AG04449 (cell line): ENCODE measurements at regions of chrX and their contacts with region 1.

Region 1: DNA sequence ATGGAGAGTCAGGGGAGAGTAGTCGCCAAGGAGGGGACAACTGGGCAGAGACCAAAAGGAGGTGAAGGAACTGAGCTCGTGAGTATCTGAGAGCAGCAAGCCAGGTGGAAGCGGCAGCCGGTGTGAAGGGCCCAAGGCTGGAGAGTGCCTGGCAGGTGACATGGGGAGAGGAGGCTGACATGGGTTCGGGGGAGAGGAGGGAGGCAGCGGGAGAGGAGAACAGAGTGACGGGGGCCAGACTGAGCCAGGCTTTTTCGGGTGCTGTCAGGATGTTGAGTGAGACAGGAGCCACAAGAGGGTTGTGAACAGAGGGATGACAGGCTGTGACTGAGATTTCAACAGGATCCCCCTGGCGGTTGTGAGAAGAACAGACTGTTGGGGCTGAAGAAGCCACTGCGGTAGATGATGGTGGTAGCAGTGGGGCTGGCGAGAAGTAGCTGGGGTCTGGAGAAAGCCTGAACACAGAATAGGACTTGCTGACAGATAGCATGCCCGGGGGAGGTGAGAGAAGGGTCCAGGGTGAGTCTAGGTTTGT is 5.7 kb downstream of the ELK1 start:
- DNase-seq: no peak
- H3K4me3 ChIP-seq: no peak overlapping the region
- CTCF ChIP-seq: peak; percentile 44

Region 2: DNA sequence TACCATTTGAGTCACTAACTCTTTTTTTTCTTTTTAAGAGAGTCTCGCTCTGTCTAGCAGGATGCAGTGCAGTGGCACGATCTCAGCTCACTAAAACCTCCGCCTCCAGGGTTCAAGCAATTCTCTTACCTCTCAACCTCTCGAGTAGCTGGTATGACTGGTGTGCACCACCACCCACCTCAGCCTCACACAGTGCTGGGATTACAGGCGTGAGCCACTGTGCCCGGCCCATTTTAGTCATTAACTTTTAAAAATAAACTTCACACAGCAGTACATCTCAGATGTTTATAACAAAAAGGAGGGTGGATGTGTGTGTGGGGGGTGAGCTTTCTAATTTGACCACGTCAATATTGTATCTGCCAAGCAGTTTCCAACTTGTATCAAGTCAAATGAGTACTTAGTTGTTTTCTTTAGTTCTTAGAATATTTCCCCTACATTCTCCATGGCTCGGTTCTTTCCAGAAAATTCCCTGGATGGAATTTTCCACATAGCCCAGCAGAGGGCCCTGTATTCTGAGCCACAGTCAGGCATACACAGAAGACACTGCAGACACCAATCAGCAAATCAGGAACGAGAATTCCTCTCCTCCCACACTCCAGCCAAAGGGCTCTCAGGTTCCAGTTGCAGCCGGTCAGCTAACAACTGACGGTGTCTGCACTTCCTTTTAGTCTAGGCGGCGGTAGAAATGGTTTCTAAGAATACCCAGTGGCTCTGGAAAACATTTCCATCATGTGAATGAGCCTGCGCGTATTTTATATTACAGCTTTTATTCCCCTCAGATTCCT is 103.7 kb before region 1 on chrX:
- CTCF ChIA-PET with region 1: interaction called, 45 read pairs
- POLR2A ChIA-PET with region 1: no interaction called
- DNase-seq: peak; percentile 59
- H3K4me3 ChIP-seq: no peak overlapping the region
- CTCF ChIP-seq: peak; percentile 37

Region 3: DNA sequence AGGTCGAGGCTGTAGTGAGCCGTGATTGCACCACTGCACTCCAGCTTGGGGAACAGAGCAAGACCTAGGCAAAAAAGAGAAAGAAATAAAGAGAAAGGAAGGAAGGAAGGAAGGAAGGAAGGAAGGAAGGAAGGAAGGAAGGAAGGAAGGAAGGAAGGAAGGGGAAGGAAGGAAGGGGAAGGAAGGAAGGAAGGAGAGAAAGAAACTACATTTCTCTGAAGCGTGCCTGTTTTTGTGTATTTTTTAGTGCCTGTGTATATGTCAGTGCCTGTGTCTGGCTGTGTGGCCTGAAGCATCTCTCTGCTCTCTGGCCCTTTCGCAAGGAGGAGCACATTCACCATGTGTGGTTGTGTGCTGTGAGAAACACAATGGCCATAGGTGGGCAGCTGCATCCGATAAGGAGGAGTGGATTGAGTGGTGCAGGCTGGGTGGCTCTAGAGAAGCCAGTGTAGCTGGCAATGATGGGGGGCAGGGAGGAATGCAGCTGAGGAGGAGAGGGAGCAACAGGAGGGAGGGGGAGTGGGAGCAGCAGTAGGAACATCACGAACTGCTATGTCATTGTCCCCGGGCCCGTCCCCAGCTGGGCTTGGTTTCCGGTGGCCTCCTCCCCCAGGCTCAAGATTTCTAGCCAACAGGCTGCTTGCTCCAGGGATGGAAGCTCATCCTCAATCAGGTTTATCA is 36.4 kb before region 1 on chrX:
- CTCF ChIA-PET with region 1: no interaction called
- POLR2A ChIA-PET with region 1: no interaction called
- DNase-seq: no peak
- H3K4me3 ChIP-seq: no peak overlapping the region
- CTCF ChIP-seq: no peak